Activated CD4-positive, alpha-beta T cell treated with anti-CD3 and anti-CD28 coated beads, Interleukin-2, amount 10 ng/mL, durations not matched to agents 24 days and 14 days (primary cell): ENCODE measurements at regions of chr2 and their contacts with region 1.

Region 1: GRCh38 chr2:108786354-108787199 is at the start of gene CCDC138:
- DNase-seq: peak; percentile 98
- H3K4me3 Mint-ChIP-seq: peak within 1 kb of the TSS; percentile 96
- H3K27ac Mint-ChIP-seq: peak within 1 kb of the TSS; percentile 99
- H3K4me1 Mint-ChIP-seq: peaks cover 14% of the 10 kb centered on the region
- H3K27me3 Mint-ChIP-seq: no peaks in the 10 kb centered on the region
- total RNA-seq, gene CCDC138: 19.9 and 20.1 TPM in 2 replicates

Region 2: DNA sequence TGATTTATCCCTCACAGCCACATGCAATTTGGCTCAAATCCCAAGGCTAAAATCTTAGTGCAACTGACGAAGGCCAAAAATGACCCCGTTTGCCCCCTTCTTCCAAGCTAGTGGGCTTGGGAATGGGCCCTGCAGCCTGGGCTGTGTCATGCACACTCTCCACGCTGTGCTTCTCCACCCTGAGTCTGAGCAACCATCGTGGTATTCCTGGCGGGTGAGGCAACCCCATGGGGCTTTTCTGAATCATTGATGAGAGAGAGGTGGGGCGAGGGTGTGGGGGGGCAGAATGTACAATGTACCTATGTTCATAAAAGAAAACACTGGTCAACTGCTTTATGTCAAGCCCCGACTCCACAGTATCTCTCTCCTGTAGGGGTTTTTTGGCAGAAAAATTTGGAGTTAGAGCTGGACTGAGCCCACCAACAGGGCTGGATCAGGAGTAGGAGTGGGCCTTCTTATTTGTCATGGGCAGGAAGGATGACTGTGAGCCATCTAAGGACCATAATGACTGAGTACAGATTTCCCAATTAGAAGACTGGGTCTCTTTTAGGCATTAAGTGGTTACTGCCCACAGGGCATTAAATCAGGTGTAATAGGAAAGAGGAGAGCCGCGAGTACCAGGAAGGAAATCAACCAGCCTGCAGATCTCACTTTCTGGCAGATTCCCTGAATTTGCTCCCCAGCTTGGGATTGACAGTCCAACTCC is 489.0 kb before region 1 on chr2:
- intact Hi-C with region 1: no loop called
- DNase-seq: no peak
- H3K4me3 Mint-ChIP-seq: no peak overlapping the region
- H3K27ac Mint-ChIP-seq: no peak overlapping the region
- H3K4me1 Mint-ChIP-seq: no peaks in the 10 kb centered on the region
- H3K27me3 Mint-ChIP-seq: peaks cover 2% of the 10 kb centered on the region

Region 3: DNA sequence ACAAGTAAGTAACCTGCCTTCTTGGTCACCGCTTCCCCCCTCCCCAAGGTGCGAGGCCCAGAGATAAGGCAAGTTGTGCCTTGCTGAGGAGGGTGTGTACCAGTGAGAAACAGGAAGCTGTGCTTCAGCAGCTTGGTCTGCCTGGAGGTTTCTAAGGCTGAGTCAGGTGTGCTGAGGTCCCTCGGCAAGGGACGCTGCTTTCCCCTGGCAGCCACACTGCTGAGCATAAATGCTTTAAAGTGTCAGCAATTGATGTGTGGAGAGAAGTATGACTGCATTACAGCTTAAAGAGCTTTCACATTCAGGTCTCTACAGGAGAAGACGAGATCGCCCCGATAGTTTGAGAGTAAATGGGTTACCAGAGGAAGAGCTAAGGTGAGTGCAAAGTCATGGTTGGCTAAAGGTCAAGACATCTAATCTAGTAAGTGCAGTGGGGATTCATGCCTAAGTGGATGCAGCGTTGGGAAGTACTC is 165.5 kb before region 1 on chr2:
- intact Hi-C with region 1: loop called (anchors 5 kb)
- DNase-seq: peak; percentile 93
- H3K4me3 Mint-ChIP-seq: peak overlapping the region; percentile 88
- H3K27ac Mint-ChIP-seq: peak overlapping the region; percentile 97
- H3K4me1 Mint-ChIP-seq: peaks cover 68% of the 10 kb centered on the region
- H3K27me3 Mint-ChIP-seq: no peaks in the 10 kb centered on the region

Region 4: GRCh38 chr2:108825254-108825653 is 38.7 kb after region 1 on chr2:
- intact Hi-C with region 1: no loop called
- DNase-seq: no peak
- H3K4me3 Mint-ChIP-seq: no peak overlapping the region
- H3K27ac Mint-ChIP-seq: no peak overlapping the region
- H3K4me1 Mint-ChIP-seq: no peaks in the 10 kb centered on the region
- H3K27me3 Mint-ChIP-seq: no peaks in the 10 kb centered on the region

Region 5: GRCh38 chr2:108988796-108989713 is 202.5 kb after region 1 on chr2 and contains the start of gene EDAR:
- intact Hi-C with region 1: loop called (anchors 5 kb)
- DNase-seq: peak; percentile 77
- H3K4me3 Mint-ChIP-seq: peak within 1 kb of the TSS; percentile 74
- H3K27ac Mint-ChIP-seq: peak within 1 kb of the TSS; percentile 31
- H3K4me1 Mint-ChIP-seq: peaks cover 23% of the 10 kb centered on the region
- H3K27me3 Mint-ChIP-seq: peaks cover 24% of the 10 kb centered on the region
- total RNA-seq, gene EDAR: 0.56 and 0.62 TPM in 2 replicates

Region 6: DNA sequence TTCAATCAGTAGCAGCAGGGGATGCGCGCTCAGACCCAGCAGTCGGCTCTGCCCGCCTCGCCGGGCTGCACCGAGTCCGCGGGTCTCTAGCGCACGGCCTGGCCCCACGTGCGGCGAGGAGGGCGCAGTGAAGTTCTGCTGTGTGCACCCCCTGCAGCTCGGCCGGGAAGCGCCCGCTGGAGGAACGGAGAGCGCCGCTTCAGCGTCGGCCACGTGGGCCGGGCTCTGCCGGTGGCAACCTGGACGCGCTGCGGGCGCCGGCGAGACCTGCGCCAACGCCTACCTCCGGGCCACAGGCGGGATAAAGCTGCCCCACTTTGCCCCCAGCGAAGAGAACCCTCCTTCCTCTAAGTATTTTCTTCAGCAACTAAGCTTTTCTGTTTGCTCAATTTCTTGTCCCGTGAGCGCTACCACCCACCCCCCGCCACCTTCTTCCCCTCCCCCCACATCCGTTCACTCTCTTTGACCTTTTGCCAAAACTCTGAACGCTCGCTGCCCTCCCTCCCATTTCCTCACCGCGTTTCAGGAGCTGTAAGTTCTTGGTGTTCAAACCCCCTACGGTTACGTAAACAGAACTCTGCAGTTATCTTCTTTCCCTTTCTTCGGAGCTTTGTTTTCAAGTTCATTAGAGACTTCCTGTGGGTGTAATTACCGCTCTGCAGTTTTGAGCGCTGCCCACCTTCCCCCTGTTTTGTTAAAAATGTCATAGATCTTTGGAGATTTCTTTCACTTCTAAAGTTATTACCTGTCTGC is 245.1 kb after region 1 on chr2:
- intact Hi-C with region 1: loop called (anchors 5 kb)
- DNase-seq: peak; percentile 89
- H3K4me3 Mint-ChIP-seq: peak overlapping the region; percentile 92
- H3K27ac Mint-ChIP-seq: peak overlapping the region; percentile 95
- H3K4me1 Mint-ChIP-seq: peaks cover 34% of the 10 kb centered on the region
- H3K27me3 Mint-ChIP-seq: no peaks in the 10 kb centered on the region

Region 7: GRCh38 chr2:109128466-109129355 is 342.1 kb after region 1 on chr2 and contains the start of gene SH3RF3:
- intact Hi-C with region 1: no loop called
- DNase-seq: peak; percentile 77
- H3K4me3 Mint-ChIP-seq: peak within 1 kb of the TSS; percentile 86
- H3K27ac Mint-ChIP-seq: no peak within 1 kb of the TSS
- H3K4me1 Mint-ChIP-seq: peaks cover 22% of the 10 kb centered on the region
- H3K27me3 Mint-ChIP-seq: peaks cover 52% of the 10 kb centered on the region
- total RNA-seq, gene SH3RF3: 0.47 TPM in 2 replicates